ENCODE measurements at regions of chr4 and their contacts with region 1.

Region 1: DNA sequence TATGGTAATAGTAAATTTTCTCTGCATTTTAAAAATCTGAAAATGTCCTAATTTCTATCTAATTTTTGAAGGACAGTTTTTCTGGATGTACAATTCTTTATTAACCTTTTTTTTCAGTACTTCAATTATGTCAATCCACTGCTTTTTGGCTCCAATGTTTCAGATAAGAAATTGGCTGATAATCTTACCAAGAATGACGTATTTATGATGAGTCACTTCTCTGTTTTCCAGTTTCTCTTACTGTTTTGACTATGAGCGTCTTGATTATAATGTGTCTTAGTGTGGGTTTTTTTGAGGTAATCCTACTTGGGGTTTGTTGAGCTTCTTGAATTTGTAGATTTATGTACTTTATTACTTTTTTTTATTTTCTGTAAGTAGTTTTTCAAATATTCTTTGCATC is 47.2 kb downstream of the UGT2B11 start:
- DNase-seq: no peak
- ATAC-seq: no peak
- H3K4me3 ChIP-seq: no peak overlapping the region
- H3K27ac ChIP-seq: no peak overlapping the region
- H3K4me1 ChIP-seq: no peaks in the 10 kb centered on the region
- H3K27me3 ChIP-seq: no peaks in the 10 kb centered on the region
- CTCF ChIP-seq: no peak

Region 2: DNA sequence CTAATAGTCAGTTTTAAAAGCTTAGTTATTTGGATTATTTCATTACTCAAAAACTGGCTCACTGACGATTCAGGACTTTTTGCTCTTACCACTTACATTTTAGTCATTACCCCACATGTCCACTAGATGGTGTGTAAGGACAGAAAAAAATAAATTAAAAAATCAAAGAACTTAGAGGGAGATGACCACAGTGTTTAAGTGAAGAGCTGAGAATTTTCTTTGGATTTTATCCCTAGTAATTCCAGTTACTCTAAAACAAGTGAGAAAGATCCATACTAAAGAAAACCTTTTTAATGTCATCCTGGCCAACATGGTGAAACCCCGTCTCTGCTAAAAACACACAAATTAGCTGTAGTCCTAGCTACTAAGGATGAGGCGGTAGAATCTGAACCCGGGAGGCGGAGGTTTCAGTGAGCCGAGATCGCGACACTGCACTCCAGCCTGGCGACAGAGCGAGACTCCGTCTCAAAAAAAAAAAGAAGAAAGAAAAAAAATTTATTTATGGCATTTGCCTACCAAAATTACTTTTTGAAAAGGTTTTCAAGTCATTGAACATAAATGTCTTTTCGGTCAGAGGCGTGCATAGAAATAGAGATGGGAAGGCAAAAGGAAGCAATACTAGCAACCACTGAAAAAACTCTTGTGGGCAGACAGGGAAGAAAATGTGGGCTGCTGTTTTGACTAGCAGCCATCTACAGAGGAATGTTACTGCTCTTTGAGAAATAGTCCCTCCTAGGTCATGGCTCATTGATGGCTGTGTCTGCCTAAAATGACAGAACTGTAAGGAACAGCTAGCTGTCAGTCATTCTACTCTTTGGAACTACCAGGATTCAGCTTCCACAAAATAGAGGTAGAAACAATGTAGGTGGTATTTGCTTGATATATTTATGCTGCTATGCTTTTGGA is 895.2 kb before region 1 on chr4:
- CTCF ChIA-PET with region 1: no interaction called
- POLR2A ChIA-PET with region 1: no interaction called
- intact Hi-C with region 1: loop called (anchors 10 kb)
- DNase-seq: peak; percentile 81
- ATAC-seq: peak; percentile 72
- H3K4me3 ChIP-seq: peak overlapping the region; percentile 59
- H3K27ac ChIP-seq: no peak overlapping the region
- H3K4me1 ChIP-seq: peaks cover 20% of the 10 kb centered on the region
- H3K27me3 ChIP-seq: no peaks in the 10 kb centered on the region
- CTCF ChIP-seq: peak; percentile 89

Region 3: GRCh38 chr4:68883870-68884269 is 283.4 kb before region 1 on chr4:
- CTCF ChIA-PET with region 1: no interaction called
- POLR2A ChIA-PET with region 1: no interaction called
- intact Hi-C with region 1: no loop called
- DNase-seq: no peak
- ATAC-seq: no peak
- H3K4me3 ChIP-seq: no peak overlapping the region
- H3K27ac ChIP-seq: no peak overlapping the region
- H3K4me1 ChIP-seq: no peaks in the 10 kb centered on the region
- H3K27me3 ChIP-seq: no peaks in the 10 kb centered on the region
- CTCF ChIP-seq: no peak

Region 4: GRCh38 chr4:68904786-68905185 is 262.5 kb before region 1 on chr4:
- CTCF ChIA-PET with region 1: no interaction called
- POLR2A ChIA-PET with region 1: no interaction called
- intact Hi-C with region 1: loop called (anchors 10 kb)
- DNase-seq: peak; percentile 39
- ATAC-seq: peak; percentile 52
- H3K4me3 ChIP-seq: no peak overlapping the region
- H3K27ac ChIP-seq: no peak overlapping the region
- H3K4me1 ChIP-seq: peaks cover 20% of the 10 kb centered on the region
- H3K27me3 ChIP-seq: no peaks in the 10 kb centered on the region
- CTCF ChIP-seq: peak; percentile 60

Region 5: GRCh38 chr4:69044247-69044646 is 123.1 kb before region 1 on chr4:
- CTCF ChIA-PET with region 1: no interaction called
- POLR2A ChIA-PET with region 1: no interaction called
- intact Hi-C with region 1: loop called (anchors 10 kb)
- DNase-seq: no peak
- ATAC-seq: no peak
- H3K4me3 ChIP-seq: no peak overlapping the region
- H3K27ac ChIP-seq: peak overlapping the region; percentile 26; the same call in 1 of the 2 replicates
- H3K4me1 ChIP-seq: peaks cover 4% of the 10 kb centered on the region; the same call in 1 of the 2 replicates
- H3K27me3 ChIP-seq: no peaks in the 10 kb centered on the region
- CTCF ChIP-seq: no peak

Region 6: GRCh38 chr4:69617083-69617694 is 449.9 kb after region 1 on chr4:
- CTCF ChIA-PET with region 1: no interaction called
- POLR2A ChIA-PET with region 1: no interaction called
- intact Hi-C with region 1: loop called (anchors 1 kb)
- DNase-seq: peak; percentile 76
- ATAC-seq: peak; percentile 51
- H3K4me3 ChIP-seq: no peak overlapping the region
- H3K27ac ChIP-seq: no peak overlapping the region
- H3K4me1 ChIP-seq: no peaks in the 10 kb centered on the region
- H3K27me3 ChIP-seq: peaks cover 11% of the 10 kb centered on the region; the same call in 1 of the 2 replicates
- CTCF ChIP-seq: peak; percentile 83